Naive thymus-derived CD4-positive, alpha-beta T cell (primary cell): ENCODE measurements at regions of chr9 and their contacts with region 1.

Region 1: DNA sequence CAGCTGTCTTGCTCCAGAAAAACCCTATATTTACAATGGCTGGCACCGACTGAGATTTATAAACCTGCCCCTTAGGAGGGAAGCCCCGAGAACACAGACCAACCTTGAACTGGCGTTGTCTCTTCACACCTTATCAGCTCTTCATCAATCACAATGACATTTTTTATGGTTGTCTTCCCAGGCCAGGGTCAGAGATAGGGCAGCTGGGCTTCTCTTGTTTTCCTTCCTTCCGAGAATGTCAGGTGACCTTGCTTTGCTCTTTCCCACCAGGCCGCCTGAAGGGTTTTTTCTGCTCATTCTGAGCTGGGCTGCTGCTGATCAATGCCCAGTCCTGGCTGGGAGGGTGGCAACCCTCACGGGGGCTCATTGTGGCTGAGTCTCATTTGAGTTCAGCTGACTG is 619.1 kb downstream of the CCDC171 start:
- DNase-seq: no peak
- ATAC-seq: no peak
- H3K4me3 ChIP-seq: no peak overlapping the region
- H3K4me3 Mint-ChIP-seq: no peak overlapping the region
- H3K27ac ChIP-seq: no peak overlapping the region
- H3K27ac Mint-ChIP-seq: no peak overlapping the region
- H3K4me1 ChIP-seq: no peaks in the 10 kb centered on the region
- H3K4me1 Mint-ChIP-seq: no peaks in the 10 kb centered on the region
- H3K27me3 ChIP-seq: no peaks in the 10 kb centered on the region
- H3K27me3 Mint-ChIP-seq: peaks cover 0 to 8% (median 0%) of the 10 kb centered on the region in 5 donors

Region 2: GRCh38 chr9:16191691-16192402 is 19.9 kb after region 1 on chr9:
- CTCF ChIA-PET with region 1: no interaction called
- POLR2A ChIA-PET with region 1: no interaction called
- intact Hi-C with region 1: loop called in 1 of 2 experiments (anchors 2 kb)
- DNase-seq: peak in 1 of 9 donors; percentile 30
- ATAC-seq: peak; percentile 80
- H3K4me3 ChIP-seq: no peak overlapping the region
- H3K4me3 Mint-ChIP-seq: peak overlapping the region in 1 of 10 donors; percentile 37
- H3K27ac ChIP-seq: no peak overlapping the region
- H3K27ac Mint-ChIP-seq: no peak overlapping the region
- H3K4me1 ChIP-seq: no peaks in the 10 kb centered on the region
- H3K4me1 Mint-ChIP-seq: peaks cover 0 to 2% (median 0%) of the 10 kb centered on the region in 7 donors
- H3K27me3 ChIP-seq: no peaks in the 10 kb centered on the region
- H3K27me3 Mint-ChIP-seq: peaks cover 0 to 25% (median 6%) of the 10 kb centered on the region in 5 donors

Region 3: GRCh38 chr9:16213781-16214515 is 42.0 kb after region 1 on chr9:
- CTCF ChIA-PET with region 1: no interaction called
- POLR2A ChIA-PET with region 1: no interaction called
- intact Hi-C with region 1: no loop called
- DNase-seq: no peak
- ATAC-seq: no peak
- H3K4me3 ChIP-seq: no peak overlapping the region
- H3K4me3 Mint-ChIP-seq: no peak overlapping the region
- H3K27ac ChIP-seq: no peak overlapping the region
- H3K27ac Mint-ChIP-seq: no peak overlapping the region
- H3K4me1 ChIP-seq: no peaks in the 10 kb centered on the region
- H3K4me1 Mint-ChIP-seq: no peaks in the 10 kb centered on the region
- H3K27me3 ChIP-seq: no peaks in the 10 kb centered on the region
- H3K27me3 Mint-ChIP-seq: peaks cover 0 to 8% (median 0%) of the 10 kb centered on the region in 5 donors